Activated naive CD4-positive, alpha-beta T cell treated with anti-CD3 and anti-CD28 coated beads, Interleukin-2, amount 10 ng/mL, durations not matched to agents 7 days and 5 days (primary cell): ENCODE measurements at regions of chr2 and their contacts with region 1.

Region 1: GRCh38 chr2:237674731-237675276 is 47.4 kb downstream of the LRRFIP1 start:
- DNase-seq: peak; percentile 91
- H3K4me3 Mint-ChIP-seq: peak overlapping the region; percentile 77
- H3K27ac Mint-ChIP-seq: peak overlapping the region; percentile 93
- H3K4me1 Mint-ChIP-seq: peaks cover 49% of the 10 kb centered on the region
- H3K27me3 Mint-ChIP-seq: peaks cover 12% of the 10 kb centered on the region

Region 2: DNA sequence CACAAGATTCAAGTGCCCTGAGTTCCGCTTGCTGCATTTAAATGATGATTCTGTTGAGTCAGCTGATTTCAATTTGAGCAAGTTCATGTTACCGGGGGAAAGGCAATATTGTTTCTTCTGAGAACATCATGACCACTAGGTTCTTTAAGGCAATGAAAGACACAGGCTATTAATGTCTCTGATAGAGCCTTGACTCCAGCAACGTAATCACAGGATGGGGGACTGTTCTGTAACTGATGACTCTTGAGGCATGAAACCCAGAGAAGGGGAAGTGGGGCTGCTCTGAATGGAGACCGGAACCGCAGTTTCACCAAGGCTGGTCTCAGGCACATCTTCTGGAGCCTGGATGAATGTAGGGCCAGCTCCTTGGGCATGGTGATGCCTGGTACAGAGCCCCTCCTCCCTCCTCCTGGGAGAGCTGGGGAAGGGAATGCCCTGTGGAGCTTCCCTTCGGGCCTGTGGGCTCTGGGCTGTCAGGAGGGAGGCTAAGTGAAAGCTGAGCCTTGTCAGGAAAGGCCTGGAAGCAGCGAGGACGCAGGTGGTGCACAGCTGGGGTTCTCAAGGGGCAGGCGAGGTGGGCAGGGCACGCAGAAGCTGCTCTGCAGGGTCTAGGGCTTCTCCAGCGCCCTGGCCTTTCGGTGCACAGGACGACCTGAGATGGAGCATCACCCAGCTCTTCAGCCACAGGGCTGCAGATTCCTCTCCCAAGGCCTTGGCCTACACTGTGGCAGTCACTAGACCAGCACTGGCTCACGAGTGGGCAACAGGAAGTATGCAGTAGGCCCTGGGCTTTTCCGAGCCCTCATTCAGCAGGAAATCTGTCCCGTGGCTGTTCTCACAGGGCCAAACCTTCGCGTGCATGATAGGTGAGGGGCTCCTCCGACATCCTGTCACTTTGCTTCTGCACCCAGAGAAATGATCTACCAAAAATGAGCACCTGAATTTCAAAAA is 145.1 kb before region 1 on chr2:
- CTCF ChIA-PET with region 1: no interaction called
- DNase-seq: no peak
- H3K4me3 Mint-ChIP-seq: no peak overlapping the region
- H3K27ac Mint-ChIP-seq: no peak overlapping the region
- H3K4me1 Mint-ChIP-seq: no peaks in the 10 kb centered on the region
- H3K27me3 Mint-ChIP-seq: peaks cover 12% of the 10 kb centered on the region

Region 3: GRCh38 chr2:237651761-237652160 is 23.0 kb before region 1 on chr2:
- CTCF ChIA-PET with region 1: no interaction called
- DNase-seq: no peak
- H3K4me3 Mint-ChIP-seq: no peak overlapping the region
- H3K27ac Mint-ChIP-seq: no peak overlapping the region
- H3K4me1 Mint-ChIP-seq: peaks cover 7% of the 10 kb centered on the region
- H3K27me3 Mint-ChIP-seq: peaks cover 28% of the 10 kb centered on the region

Region 4: DNA sequence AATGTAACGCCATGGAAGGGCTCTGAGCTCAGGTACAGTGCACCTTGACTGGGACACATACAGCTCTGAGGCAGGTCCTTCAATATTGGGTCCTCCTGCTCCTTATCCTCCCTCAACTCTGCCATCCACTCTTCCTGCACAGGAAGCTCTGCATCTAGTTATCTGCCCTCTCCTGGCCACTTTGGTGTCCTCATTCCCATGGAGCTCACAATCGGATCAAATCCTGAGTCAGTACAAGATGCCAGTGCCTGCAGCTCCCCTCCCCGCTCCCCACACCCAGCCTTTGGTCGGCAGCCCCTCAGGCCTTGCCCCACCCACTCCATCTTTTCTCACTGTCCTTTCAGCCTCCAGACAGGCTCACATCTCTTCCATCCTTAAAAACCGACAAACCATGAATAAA is 10.6 kb after region 1 on chr2:
- CTCF ChIA-PET with region 1: interaction called, 157 read pairs
- DNase-seq: no peak
- H3K4me3 Mint-ChIP-seq: no peak overlapping the region
- H3K27ac Mint-ChIP-seq: peak overlapping the region; percentile 53
- H3K4me1 Mint-ChIP-seq: peaks cover 47% of the 10 kb centered on the region
- H3K27me3 Mint-ChIP-seq: peaks cover 5% of the 10 kb centered on the region

Region 5: DNA sequence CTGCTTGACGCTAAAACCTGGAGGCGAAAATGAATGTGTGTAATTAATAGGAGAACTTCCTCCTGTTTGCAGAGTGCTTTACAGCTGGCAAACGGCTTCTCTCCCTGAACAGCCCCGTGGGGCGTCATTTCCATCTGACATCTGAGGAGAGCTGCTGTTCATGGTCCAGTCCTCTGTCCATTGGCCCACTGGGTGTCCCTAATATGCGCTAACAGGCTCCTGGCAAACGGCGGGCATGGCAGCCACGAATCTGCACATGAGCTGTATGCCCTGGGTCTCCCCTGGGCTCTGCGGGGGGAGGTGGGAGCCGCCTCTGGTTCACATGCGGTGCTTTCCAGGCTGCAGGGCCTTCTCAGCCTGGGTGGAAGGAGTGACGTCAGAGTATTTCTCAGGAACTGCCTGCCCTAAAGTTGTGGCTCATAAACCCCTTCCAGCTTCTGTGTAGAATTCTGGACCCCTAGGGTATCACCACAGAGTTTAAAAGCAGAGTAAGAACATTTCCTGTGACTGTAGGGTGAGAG is 25.8 kb after region 1 on chr2:
- CTCF ChIA-PET with region 1: interaction called, 157 read pairs
- DNase-seq: peak; percentile 64
- H3K4me3 Mint-ChIP-seq: peak overlapping the region; percentile 37
- H3K27ac Mint-ChIP-seq: peak overlapping the region; percentile 87
- H3K4me1 Mint-ChIP-seq: peaks cover 96% of the 10 kb centered on the region
- H3K27me3 Mint-ChIP-seq: no peaks in the 10 kb centered on the region

Region 6: DNA sequence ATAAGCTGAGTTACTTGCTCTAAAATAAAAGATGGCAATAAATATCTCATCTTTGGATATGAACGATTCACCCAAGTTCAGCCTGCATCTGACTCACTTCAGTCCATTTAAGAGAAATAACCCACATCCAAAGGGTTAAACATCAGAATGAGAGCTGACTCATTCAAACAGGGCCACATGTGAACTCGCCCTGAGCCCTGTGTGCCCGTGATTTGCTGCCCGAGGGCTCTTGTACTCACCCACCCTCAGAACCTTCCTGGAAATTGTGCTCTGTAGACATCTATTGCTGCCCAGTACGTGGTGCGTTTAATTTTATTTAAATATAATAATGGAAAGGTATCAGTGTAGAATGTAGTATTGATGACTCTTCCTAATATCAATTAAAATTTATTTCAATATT is 56.9 kb after region 1 on chr2:
- CTCF ChIA-PET with region 1: interaction called, 39 read pairs
- DNase-seq: no peak
- H3K4me3 Mint-ChIP-seq: no peak overlapping the region
- H3K27ac Mint-ChIP-seq: peak overlapping the region; percentile 24
- H3K4me1 Mint-ChIP-seq: peaks cover 28% of the 10 kb centered on the region
- H3K27me3 Mint-ChIP-seq: no peaks in the 10 kb centered on the region

Region 7: GRCh38 chr2:237752761-237753165 is 78.0 kb after region 1 on chr2:
- CTCF ChIA-PET with region 1: interaction called, 181 read pairs
- DNase-seq: no peak
- H3K4me3 Mint-ChIP-seq: no peak overlapping the region
- H3K27ac Mint-ChIP-seq: peak overlapping the region; percentile 14
- H3K4me1 Mint-ChIP-seq: peaks cover 2% of the 10 kb centered on the region
- H3K27me3 Mint-ChIP-seq: no peaks in the 10 kb centered on the region